Naive thymus-derived CD4-positive, alpha-beta T cell (primary cell): ENCODE measurements at regions of chr14 and their contacts with region 1.

Region 1: DNA sequence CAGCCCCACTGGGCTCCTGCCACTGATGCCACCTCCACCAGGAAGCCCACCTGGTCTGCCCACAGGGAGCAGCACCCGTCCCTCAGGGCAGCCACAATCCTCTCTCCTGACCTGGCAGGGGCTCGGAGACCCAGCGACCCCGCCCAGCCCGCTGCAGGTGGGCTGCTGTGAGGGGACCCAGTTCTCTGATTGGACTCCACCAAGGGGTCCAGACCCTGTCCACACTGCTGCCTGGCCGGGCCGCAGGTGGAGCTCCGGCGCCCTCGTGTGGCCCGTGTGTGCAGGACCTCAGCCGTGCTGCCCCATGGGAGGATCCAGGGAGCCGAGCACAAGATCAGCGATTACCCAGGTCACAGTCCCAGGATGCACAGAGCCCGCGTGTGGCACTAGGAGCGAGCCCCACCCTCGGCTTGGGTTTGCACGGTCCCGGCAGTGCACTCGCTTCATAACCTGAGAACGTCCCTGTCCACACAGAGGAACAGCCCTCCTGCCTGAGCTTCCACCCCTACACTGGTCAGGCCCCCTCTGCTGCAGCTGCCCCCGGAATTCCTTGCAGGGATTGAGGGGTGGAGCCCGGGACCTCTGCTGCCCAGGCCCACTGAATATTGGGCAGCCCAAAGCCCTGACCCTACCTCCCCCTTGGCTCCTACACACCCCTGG is 35.4 kb upstream of the TMEM179 start:
- DNase-seq: peak in 6 of 9 donors; percentile 20 to 57 (median 42)
- ATAC-seq: peak; percentile 66
- H3K4me3 ChIP-seq: no peak overlapping the region
- H3K4me3 Mint-ChIP-seq: no peak overlapping the region
- H3K27ac ChIP-seq: no peak overlapping the region
- H3K27ac Mint-ChIP-seq: no peak overlapping the region
- H3K4me1 ChIP-seq: no peaks in the 10 kb centered on the region
- H3K4me1 Mint-ChIP-seq: peaks cover 0 to 5% (median 0%) of the 10 kb centered on the region in 7 donors
- H3K27me3 ChIP-seq: no peaks in the 10 kb centered on the region
- H3K27me3 Mint-ChIP-seq: peaks cover 0 to 12% (median 7%) of the 10 kb centered on the region in 5 donors

Region 2: GRCh38 chr14:104094709-104095438 is 545.1 kb before region 1 on chr14:
- CTCF ChIA-PET with region 1: no interaction called
- POLR2A ChIA-PET with region 1: no interaction called
- intact Hi-C with region 1: loop called in 1 of 2 experiments (anchors 1 kb)
- DNase-seq: peak; percentile 48 to 82 (median 67)
- ATAC-seq: peak; percentile 62
- H3K4me3 ChIP-seq: no peak overlapping the region
- H3K4me3 Mint-ChIP-seq: no peak overlapping the region
- H3K27ac ChIP-seq: no peak overlapping the region
- H3K27ac Mint-ChIP-seq: no peak overlapping the region
- H3K4me1 ChIP-seq: peaks cover 0 to 7% of the 10 kb centered on the region in 2 donors
- H3K4me1 Mint-ChIP-seq: peaks cover 0 to 6% (median 3%) of the 10 kb centered on the region in 7 donors
- H3K27me3 ChIP-seq: no peaks in the 10 kb centered on the region
- H3K27me3 Mint-ChIP-seq: no peaks in the 10 kb centered on the region